H1 (cell line): ENCODE measurements at regions of chr3 and their contacts with region 1.

Region 1: GRCh38 chr3:114290911-114291901 is 2.6 kb upstream of the TIGIT start:
- DNase-seq: peak; percentile 88 to 100
- H3K4me3 ChIP-seq: no peak overlapping the region
- H3K27ac ChIP-seq: no peak overlapping the region
- H3K4me1 ChIP-seq: peaks cover 0 to 4% (median 2%) of the 10 kb centered on the region in 4 experiments; a peak in 2 of 7 replicates
- H3K27me3 ChIP-seq: no peaks in the 10 kb centered on the region
- CTCF ChIP-seq: peak; percentile 92 to 97 (median 96)
- EP300 ChIP-seq: no peak
- POLR2A ChIP-seq: no peak
- RAD21 ChIP-seq: peak; percentile 92 to 96

Region 2: DNA sequence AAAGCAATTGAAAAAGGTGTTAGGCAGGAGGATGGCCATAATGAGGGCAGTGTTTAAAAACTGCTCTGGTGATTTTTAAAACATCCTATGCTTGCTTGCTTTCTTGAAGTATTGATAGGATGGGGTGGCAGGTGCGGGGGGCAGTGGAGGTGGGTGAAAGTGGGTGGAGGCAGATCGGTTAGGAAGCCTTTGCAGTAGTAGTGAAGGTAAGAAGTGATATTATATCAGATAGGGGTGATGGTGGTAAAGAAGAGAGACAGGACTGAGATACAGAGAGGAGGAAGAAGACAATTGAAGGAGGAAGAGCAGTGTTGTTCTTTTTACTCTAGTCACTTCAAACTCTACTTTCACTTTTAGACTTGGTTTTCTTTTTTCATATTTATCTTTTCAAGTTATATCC is 64.9 kb before region 1 on chr3:
- CTCF ChIA-PET with region 1: no interaction called
- POLR2A ChIA-PET with region 1: no interaction called
- DNase-seq: no peak
- H3K4me3 ChIP-seq: no peak overlapping the region
- H3K27ac ChIP-seq: no peak overlapping the region
- H3K4me1 ChIP-seq: no peaks in the 10 kb centered on the region; a peak in 1 of 7 replicates
- H3K27me3 ChIP-seq: no peaks in the 10 kb centered on the region
- CTCF ChIP-seq: no peak
- EP300 ChIP-seq: no peak
- POLR2A ChIP-seq: no peak
- RAD21 ChIP-seq: no peak

Region 3: DNA sequence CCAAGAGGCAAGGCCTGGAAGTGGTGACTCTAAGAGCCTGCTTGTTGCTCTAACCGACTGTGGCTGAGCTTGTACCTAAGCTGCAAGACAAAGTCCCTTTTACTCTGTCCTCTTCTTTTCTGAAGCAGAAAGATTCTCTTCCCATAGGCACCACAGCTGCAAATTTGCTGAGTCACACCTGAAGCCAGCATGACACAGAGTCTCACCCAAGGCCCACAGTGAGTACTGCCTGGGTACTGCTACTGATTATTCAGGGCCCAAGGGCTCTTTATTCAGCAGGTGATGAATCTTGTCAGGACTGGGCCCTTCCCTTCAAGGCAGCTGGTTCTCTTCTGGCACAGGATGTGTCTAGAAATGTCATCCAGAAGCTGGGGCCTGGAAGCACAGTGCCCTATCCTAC is 16.3 kb before region 1 on chr3:
- CTCF ChIA-PET with region 1: interaction called, 10 read pairs
- POLR2A ChIA-PET with region 1: no interaction called
- DNase-seq: no peak
- H3K4me3 ChIP-seq: no peak overlapping the region
- H3K27ac ChIP-seq: no peak overlapping the region
- H3K4me1 ChIP-seq: no peaks in the 10 kb centered on the region
- H3K27me3 ChIP-seq: no peaks in the 10 kb centered on the region
- CTCF ChIP-seq: no peak
- EP300 ChIP-seq: no peak
- POLR2A ChIP-seq: no peak
- RAD21 ChIP-seq: no peak

Region 4: GRCh38 chr3:114307222-114307830 is 16.1 kb after region 1 on chr3:
- CTCF ChIA-PET with region 1: interaction called, 13 read pairs
- POLR2A ChIA-PET with region 1: no interaction called
- DNase-seq: no peak
- H3K4me3 ChIP-seq: no peak overlapping the region
- H3K27ac ChIP-seq: no peak overlapping the region
- H3K4me1 ChIP-seq: no peaks in the 10 kb centered on the region
- H3K27me3 ChIP-seq: no peaks in the 10 kb centered on the region
- CTCF ChIP-seq: no peak
- EP300 ChIP-seq: no peak
- POLR2A ChIP-seq: no peak
- RAD21 ChIP-seq: no peak

Region 5: GRCh38 chr3:114356066-114356465 is 64.9 kb after region 1 on chr3:
- CTCF ChIA-PET with region 1: interaction called, 19 read pairs
- POLR2A ChIA-PET with region 1: no interaction called
- DNase-seq: peak in 1 of 2 experiments; percentile 19
- H3K4me3 ChIP-seq: peak overlapping the region in 1 of 4 experiments; percentile 25; a peak in 2 of 8 replicates
- H3K27ac ChIP-seq: no peak overlapping the region
- H3K4me1 ChIP-seq: peaks cover 7 to 18% (median 12%) of the 10 kb centered on the region in 4 experiments
- H3K27me3 ChIP-seq: no peaks in the 10 kb centered on the region
- CTCF ChIP-seq: no peak
- EP300 ChIP-seq: no peak
- POLR2A ChIP-seq: no peak
- RAD21 ChIP-seq: no peak

Region 6: GRCh38 chr3:114362815-114363214 is 71.6 kb after region 1 on chr3:
- CTCF ChIA-PET with region 1: interaction called, 25 read pairs
- POLR2A ChIA-PET with region 1: no interaction called
- DNase-seq: no peak
- H3K4me3 ChIP-seq: no peak overlapping the region
- H3K27ac ChIP-seq: no peak overlapping the region
- H3K4me1 ChIP-seq: peaks cover 0 to 5% (median 0%) of the 10 kb centered on the region in 4 experiments; a peak in 1 of 7 replicates
- H3K27me3 ChIP-seq: no peaks in the 10 kb centered on the region
- CTCF ChIP-seq: peak in 1 of 3 experiments; percentile 30; a peak in 2 of 4 replicates
- EP300 ChIP-seq: no peak
- POLR2A ChIP-seq: no peak
- RAD21 ChIP-seq: peak in 1 of 2 experiments; percentile 32; a peak in 2 of 4 replicates

Region 7: GRCh38 chr3:114706591-114707232 is 415.5 kb after region 1 on chr3:
- CTCF ChIA-PET with region 1: no interaction called
- POLR2A ChIA-PET with region 1: no interaction called
- DNase-seq: no peak
- H3K4me3 ChIP-seq: no peak overlapping the region
- H3K27ac ChIP-seq: no peak overlapping the region
- H3K4me1 ChIP-seq: peaks cover 0 to 4% (median 3%) of the 10 kb centered on the region in 4 experiments; a peak in 4 of 7 replicates
- H3K27me3 ChIP-seq: no peaks in the 10 kb centered on the region
- CTCF ChIP-seq: no peak
- EP300 ChIP-seq: no peak
- POLR2A ChIP-seq: no peak
- RAD21 ChIP-seq: no peak